Left lung (tissue), 14 donors: ENCODE measurements at regions of chr1 and their contacts with region 1.

Region 1: DNA sequence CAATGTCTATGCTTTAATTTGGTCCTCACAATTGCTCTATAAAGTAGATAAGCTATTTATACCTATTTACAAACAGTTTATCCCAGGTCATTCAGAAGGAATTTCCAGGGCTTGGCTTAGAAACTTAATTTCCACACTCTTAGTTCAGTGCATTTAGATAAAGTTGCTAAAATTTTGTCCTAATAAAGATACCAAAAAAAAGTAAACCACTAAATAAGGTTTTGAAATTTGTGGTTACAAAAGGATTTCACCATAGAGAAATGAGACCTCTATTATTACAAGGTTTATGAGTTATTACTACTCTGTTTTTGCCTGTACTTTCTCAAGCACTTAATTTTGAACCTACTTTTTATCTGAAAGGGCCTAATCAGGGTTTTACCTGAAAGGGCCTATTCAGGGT is 22.5 kb downstream of the PTPN22 start:
- DNase-seq: no peak
- ATAC-seq: no peak
- H3K4me3 ChIP-seq: no peak overlapping the region
- H3K27ac ChIP-seq: no peak overlapping the region
- H3K4me1 ChIP-seq: peaks cover 0 to 9% of the 10 kb centered on the region in 2 donors
- H3K27me3 ChIP-seq: no peaks in the 10 kb centered on the region
- CTCF ChIP-seq: no peak

Region 2: GRCh38 chr1:113904674-113905434 is 55.8 kb after region 1 on chr1 and contains the starts of genes AP4B1 and DCLRE1B:
- intact Hi-C with region 1: loop called in 1 of 2 experiments (anchors 5 kb)
- DNase-seq: peak; percentile 100
- ATAC-seq: peak; percentile 97
- H3K4me3 ChIP-seq: peak within 1 kb of the TSS; percentile 77 to 79
- H3K27ac ChIP-seq: peak within 1 kb of the TSS; percentile 94 to 96
- H3K4me1 ChIP-seq: peaks cover 12 to 56% of the 10 kb centered on the region in 2 donors
- H3K27me3 ChIP-seq: no peaks in the 10 kb centered on the region
- CTCF ChIP-seq: peak; percentile 44 to 64
- polyA plus RNA-seq, gene AP4B1: 51.5 to 65.1 (median 56.1) TPM
- polyA plus RNA-seq, gene DCLRE1B: 8.5 to 11.9 (median 10.2) TPM

Region 3: DNA sequence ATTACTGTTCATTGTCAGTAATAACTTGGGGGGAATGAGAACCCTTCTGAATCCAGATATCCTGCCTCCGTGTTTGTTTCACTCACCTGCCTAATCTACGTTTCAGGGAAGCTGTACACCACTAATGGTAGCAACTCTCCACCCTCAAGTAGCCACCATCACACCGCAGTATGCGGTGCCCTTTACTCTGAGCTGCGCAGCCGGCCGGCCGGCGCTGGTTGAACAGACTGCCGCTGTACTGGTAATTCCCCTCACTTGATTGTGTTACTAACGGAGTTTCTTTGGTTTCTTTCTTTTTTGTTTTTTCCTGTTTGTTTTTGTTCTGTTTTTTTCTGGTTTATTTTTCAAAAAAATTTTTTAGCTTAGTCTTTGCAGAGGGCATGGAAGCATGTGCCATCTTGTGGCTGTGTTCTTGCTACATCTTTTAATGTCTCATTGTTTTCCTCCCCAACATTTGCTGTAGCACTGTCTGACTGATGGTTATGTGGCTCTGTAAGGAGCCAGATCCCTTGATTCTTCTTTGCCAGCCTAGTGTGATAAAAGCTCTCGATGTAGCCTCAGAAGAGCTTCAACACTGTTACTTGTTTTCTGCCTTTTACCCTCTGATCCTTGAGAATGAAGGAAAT is 114.3 kb after region 1 on chr1:
- intact Hi-C with region 1: no loop called
- DNase-seq: no peak
- ATAC-seq: no peak
- H3K4me3 ChIP-seq: no peak overlapping the region
- H3K27ac ChIP-seq: no peak overlapping the region
- H3K4me1 ChIP-seq: no peaks in the 10 kb centered on the region
- H3K27me3 ChIP-seq: no peaks in the 10 kb centered on the region
- CTCF ChIP-seq: no peak